Common myeloid progenitor, CD34-positive (primary cell): ENCODE measurements at regions of chr14 and their contacts with region 1.

Region 1: DNA sequence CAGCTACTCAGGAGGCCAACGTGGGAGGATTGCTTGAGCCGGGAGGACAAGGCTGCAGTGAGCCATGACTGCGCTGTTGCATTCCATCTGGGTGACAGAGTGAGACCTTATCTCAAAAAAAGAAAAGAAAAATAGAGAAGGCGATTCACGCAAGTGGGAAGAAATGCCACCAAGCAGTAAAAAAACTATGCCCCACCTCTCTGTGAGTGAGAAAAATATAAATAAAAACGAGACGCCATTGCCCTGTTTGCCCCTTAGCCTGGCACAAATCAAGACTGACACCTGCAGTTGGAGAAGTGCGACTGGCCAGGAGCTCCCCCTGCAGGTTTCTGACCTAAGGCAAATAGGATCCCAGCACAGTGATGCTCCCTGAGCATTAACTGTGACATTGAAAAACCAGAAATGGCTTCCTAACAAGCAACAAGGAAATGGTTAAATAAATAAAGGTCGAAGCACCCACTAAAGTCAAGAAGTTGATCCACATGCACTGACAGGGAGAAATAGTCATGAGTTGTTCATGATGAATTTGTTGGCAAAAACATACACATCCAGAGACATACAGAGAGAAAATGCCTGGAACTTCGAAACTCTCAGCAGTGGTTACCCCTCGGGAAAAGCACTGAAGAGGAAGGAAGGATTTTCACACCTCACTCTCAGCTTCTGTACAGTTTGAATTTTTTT is 21.1 kb downstream of the GSC start:
- DNase-seq: peak; percentile 49 to 63 (median 49)
- H3K4me3 ChIP-seq: no peak overlapping the region
- H3K27ac ChIP-seq: no peak overlapping the region
- H3K4me1 ChIP-seq: no peaks in the 10 kb centered on the region
- H3K27me3 ChIP-seq: peaks cover 0 to 14% (median 3%) of the 10 kb centered on the region in 5 experiments

Region 2: DNA sequence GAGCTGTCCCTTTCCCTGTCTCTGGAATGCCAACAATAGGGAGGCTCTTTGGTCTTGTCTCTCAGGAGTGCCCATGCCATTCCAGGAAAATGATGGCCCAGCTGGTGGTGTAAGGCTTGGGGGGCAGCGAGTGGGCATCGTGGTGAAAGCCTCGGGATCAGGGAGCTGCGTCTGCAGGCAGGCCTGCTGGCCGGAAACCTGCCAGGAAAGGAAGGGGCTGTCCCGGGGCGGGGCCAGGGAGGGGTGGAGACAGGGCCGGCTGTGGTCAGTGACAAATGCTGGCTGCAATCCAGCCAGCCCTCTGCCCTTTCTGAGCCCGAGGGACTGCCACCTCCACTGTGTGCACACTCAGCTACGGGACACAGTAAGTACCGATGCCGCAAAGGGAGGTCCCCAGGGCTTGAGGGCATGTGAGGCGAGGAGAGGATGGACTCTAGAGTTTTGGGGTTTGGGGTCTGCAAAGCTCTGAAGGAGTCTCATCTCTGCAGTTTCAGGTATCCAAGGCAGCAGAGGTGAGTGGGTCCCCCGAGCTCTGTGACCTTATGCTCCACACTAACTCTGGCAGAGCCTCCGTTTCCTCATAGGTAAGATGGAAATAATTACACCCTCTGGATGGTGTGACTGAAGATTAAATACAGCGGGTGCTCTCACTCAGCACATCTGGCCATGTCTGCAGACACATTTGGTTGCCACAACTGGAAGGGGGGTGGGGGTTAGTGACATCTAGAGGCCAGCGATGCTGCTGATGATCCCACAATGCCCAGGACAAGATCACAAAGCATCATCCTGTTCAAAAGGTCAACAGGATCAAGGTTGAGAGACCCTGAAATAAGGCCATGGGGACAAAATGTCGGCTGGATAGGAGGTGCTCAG is 167.4 kb before region 1 on chr14 and contains the start of gene SERPINA5:
- CTCF ChIA-PET with region 1: no interaction called
- POLR2A ChIA-PET with region 1: no interaction called
- DNase-seq: no peak
- H3K4me3 ChIP-seq: no peak within 1 kb of the TSS
- H3K27ac ChIP-seq: no peak within 1 kb of the TSS
- H3K4me1 ChIP-seq: peaks cover 0 to 2% (median 0%) of the 10 kb centered on the region in 4 experiments
- H3K27me3 ChIP-seq: peaks cover 0 to 13% (median 0%) of the 10 kb centered on the region in 5 experiments

Region 3: DNA sequence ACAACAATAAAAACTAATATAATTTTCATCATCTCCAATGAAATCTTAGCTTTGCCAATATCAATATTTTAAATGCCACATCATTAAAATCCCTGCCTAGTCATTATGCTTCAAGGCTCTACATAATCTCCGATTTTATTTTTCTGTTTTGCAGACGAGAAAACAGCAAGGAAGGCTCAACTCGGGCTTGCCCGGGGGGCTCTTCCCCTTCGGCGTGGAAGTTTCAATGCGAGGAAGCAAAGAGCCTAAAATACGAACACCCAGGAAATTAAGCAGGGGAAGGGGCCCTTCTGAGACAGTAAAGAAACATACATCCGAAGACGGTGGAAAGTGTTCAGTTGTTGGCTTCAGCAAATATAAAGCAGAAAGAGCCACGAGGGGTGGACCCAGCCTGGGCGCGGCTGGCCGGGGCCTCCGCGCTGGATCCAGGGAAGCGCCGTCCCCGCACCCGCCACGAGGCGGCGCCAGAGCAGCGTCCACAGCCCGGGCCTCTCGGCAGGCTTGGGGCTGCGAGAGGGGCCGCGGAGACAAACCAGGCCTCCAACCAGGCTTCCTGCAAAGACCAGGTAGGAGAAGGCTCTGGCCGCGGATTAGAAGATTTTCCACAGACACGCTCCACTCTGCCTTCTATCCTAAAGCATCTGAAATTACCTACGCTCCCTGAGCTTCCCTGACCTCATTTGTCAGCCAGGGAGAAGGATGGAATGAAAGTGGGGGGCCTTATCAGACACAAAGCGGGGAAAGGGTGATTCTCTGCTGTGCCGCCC is 59.4 kb before region 1 on chr14:
- CTCF ChIA-PET with region 1: interaction called, 14 read pairs
- POLR2A ChIA-PET with region 1: no interaction called
- DNase-seq: peak; percentile 40 to 65 (median 62)
- H3K4me3 ChIP-seq: peak overlapping the region in 2 of 7 experiments; percentile 26 to 59
- H3K27ac ChIP-seq: no peak overlapping the region
- H3K4me1 ChIP-seq: peaks cover 0 to 10% (median 0%) of the 10 kb centered on the region in 4 experiments
- H3K27me3 ChIP-seq: peaks cover 0 to 21% (median 4%) of the 10 kb centered on the region in 5 experiments

Region 4: GRCh38 chr14:94880876-94881275 is 132.1 kb after region 1 on chr14:
- CTCF ChIA-PET with region 1: no interaction called
- POLR2A ChIA-PET with region 1: no interaction called
- DNase-seq: no peak
- H3K4me3 ChIP-seq: no peak overlapping the region
- H3K27ac ChIP-seq: no peak overlapping the region
- H3K4me1 ChIP-seq: no peaks in the 10 kb centered on the region
- H3K27me3 ChIP-seq: peaks cover 0 to 20% (median 2%) of the 10 kb centered on the region in 5 experiments